Activated naive CD4-positive, alpha-beta T cell treated with anti-CD3 and anti-CD28 coated beads for 36 hours (primary cell): ENCODE measurements at regions of chr5 and their contacts with region 1.

Region 1: GRCh38 chr5:126536874-126537273 is 58.1 kb downstream of the ALDH7A1 start:
- DNase-seq: no peak
- H3K4me3 Mint-ChIP-seq: no peak overlapping the region
- H3K27ac Mint-ChIP-seq: no peak overlapping the region
- H3K4me1 Mint-ChIP-seq: no peaks in the 10 kb centered on the region
- H3K27me3 Mint-ChIP-seq: no peaks in the 10 kb centered on the region

Region 2: GRCh38 chr5:126508962-126509279 is 28.0 kb before region 1 on chr5:
- CTCF ChIA-PET with region 1: interaction called, 3 read pairs
- intact Hi-C with region 1: loop called (anchors 2 kb)
- DNase-seq: peak; percentile 28
- H3K4me3 Mint-ChIP-seq: peak overlapping the region; percentile 33
- H3K27ac Mint-ChIP-seq: peak overlapping the region; percentile 64
- H3K4me1 Mint-ChIP-seq: peaks cover 40% of the 10 kb centered on the region
- H3K27me3 Mint-ChIP-seq: no peaks in the 10 kb centered on the region